ENCODE measurements at regions of chr11 and their contacts with region 1.

Region 1: DNA sequence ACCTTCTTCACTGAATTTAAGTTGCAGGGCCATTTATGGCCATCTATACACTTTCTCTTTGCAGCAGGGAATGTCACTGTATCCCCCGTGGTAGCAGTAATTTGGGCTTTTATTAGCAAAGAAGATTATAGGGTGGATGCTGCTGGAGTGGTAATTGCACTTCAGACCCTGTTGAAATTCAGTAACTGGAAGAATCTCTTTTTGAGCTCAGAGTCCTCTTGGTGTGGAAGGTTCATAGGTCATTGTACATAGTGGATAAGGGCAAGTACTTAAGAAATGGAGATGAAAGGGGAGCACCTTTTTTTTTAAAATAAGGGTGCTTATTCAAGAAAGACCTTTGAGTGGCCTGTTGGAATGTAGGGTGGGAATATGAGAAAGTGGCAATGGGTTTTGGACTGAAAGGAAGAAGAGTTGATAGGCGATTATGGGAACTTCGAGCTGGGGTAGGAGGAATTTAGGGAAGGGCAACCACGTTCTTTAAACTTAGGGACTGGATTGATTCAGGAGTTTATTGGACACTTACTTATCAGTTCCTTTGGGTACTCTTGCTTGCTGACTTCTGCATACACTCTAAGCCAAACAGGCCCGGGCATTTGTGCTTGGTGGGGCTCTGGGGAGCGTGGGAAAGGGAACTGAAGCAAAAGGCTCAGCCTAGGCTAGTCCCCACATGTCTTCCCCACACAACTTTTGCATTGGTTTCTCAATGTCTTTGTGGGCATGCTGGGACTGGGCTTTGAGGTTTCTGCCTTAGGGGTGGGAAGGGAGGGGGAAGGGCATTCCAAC is 26.5 kb downstream of the CTNND1 start:
- DNase-seq: peak; percentile 59
- CTCF ChIP-seq: no peak

Region 2: DNA sequence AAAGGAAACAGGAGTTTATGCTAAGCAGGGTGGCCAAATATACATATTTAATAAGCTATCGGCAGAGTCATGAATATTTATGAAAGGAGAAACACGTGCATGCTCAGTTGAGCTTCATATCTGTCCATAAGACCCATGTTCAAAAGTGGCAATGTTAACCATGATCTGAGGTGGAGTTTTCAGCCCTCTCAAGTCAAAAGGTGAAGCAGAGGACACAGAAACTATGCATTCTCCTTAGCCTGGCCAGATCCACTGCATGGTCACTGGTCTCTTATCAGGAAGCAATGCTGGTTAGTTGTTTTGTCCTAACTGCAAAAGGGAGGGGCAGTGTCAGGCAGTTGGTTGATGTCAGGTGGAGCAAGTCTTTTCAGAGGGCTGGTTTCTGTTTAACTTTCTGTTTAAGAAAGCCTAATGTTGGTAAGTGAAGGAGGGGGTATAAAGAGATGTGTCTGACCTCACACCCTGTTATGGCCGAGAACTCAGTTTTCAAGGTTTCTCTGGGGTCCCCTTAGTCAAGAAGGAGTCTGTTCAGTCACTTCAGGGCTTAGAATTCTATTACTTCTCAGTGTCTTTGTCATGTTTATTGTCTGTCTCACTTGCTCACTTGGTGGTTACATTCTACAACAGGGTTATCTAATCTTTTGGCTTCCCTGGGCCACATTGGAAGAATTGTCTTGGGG is 52.4 kb before region 1 on chr11:
- CTCF ChIA-PET with region 1: no interaction called
- POLR2A ChIA-PET with region 1: interaction called, 10 read pairs
- DNase-seq: no peak
- CTCF ChIP-seq: no peak

Region 3: GRCh38 chr11:57772562-57772961 is 15.5 kb before region 1 on chr11:
- CTCF ChIA-PET with region 1: no interaction called
- POLR2A ChIA-PET with region 1: no interaction called
- DNase-seq: no peak
- CTCF ChIP-seq: no peak

Region 4: GRCh38 chr11:58086528-58086927 is 298.4 kb after region 1 on chr11:
- CTCF ChIA-PET with region 1: no interaction called
- POLR2A ChIA-PET with region 1: no interaction called
- DNase-seq: no peak
- CTCF ChIP-seq: no peak

Measured in GM10248 (cell line).